Caco-2 (cell line): ENCODE measurements at regions of chr1 and their contacts with region 1.

Region 1: GRCh38 chr1:16236511-16237342 is at the start of gene CPLANE2:
- DNase-seq: peak; percentile 92 to 93
- H3K4me3 ChIP-seq: peak within 1 kb of the TSS; percentile 68
- H3K4me3 Mint-ChIP-seq: peak within 1 kb of the TSS; percentile 82
- H3K27ac Mint-ChIP-seq: peak within 1 kb of the TSS; percentile 93
- H3K4me1 ChIP-seq: 0 out of 2 replicates have a peak, but pooled peaks cover 5% of the 10 kb centered on the region
- H3K4me1 Mint-ChIP-seq: no peaks in the 10 kb centered on the region
- H3K27me3 ChIP-seq: no peaks in the 10 kb centered on the region
- H3K27me3 Mint-ChIP-seq: no peaks in the 10 kb centered on the region
- CTCF ChIP-seq: no peak
- total RNA-seq, gene CPLANE2: 2.1 and 4.2 TPM in 2 replicates

Region 2: DNA sequence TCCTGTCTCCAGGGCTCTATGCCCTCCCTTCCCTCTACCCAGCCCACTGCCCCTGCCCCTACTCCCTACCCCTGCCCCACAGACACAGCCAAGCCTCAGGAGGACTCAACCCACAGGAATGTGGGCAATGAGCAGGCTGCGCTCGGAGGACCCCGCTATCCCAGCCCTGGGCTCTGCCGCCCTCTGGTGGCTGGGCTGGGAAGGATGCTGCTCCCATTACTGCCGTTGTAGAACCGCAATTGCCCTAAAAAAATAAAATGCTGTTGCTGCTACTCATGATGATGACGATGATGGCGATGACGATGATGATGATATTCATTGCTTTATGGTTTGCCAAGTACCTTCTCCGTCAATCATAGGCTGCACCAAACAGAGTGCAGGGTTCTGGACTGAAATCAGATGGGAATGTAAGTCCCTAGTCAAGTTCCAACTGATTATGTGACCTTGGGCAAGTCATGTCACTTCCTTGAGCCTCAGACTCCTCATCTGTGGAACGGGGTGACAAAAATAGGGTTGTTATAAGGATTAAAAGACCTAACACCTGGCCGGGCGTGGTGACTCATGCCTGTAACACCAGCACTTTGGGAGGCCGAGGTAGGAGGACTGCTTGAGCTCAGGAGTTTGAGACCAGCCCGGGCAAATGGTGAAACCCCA is 48.9 kb before region 1 on chr1:
- CTCF ChIA-PET with region 1: no interaction called
- POLR2A ChIA-PET with region 1: no interaction called
- intact Hi-C with region 1: loop called (anchors 5 kb)
- DNase-seq: peak; percentile 73 to 85
- H3K4me3 ChIP-seq: no peak overlapping the region
- H3K4me3 Mint-ChIP-seq: no peak overlapping the region
- H3K27ac Mint-ChIP-seq: no peak overlapping the region
- H3K4me1 ChIP-seq: peaks cover 26% of the 10 kb centered on the region
- H3K4me1 Mint-ChIP-seq: peaks cover 15% of the 10 kb centered on the region
- H3K27me3 ChIP-seq: no peaks in the 10 kb centered on the region
- H3K27me3 Mint-ChIP-seq: no peaks in the 10 kb centered on the region
- CTCF ChIP-seq: peak; percentile 85 to 89

Region 3: DNA sequence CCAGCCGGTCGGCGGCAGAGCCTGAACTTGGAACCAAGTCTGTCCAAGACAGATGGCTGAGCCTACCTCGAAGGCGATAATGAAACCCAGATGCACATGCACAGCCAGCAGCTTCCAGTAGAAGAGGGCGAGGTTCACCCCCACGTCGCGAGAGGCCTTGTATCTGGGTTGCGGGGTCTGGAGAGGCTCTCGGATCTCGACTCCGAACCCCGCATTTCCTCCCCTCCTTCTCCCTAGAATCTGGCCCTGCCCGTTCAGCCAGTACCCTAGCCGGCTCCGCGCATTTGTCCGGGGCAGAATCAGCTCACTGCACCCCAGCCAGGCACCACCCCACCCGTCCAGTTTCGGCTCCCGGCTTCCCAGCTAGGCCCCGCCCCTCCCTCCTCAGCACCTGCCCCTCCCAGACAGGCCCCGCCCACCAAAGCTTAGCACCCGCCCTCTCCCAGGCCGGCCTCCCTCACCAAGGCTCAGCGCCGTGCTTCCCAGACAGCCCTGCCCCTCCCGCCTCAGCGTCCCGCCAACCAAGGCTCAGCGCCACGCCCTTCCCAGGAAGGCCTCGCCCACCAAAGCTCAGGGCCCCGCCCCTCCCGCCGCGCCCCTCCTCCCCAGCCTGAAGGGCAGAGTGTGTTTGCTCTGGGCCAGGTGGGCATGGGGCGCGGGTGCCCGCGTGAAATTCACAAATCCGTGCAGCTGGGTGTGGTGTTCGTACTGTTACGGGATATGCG is 19.5 kb before region 1 on chr1:
- CTCF ChIA-PET with region 1: no interaction called
- POLR2A ChIA-PET with region 1: interaction called, 5 read pairs
- intact Hi-C with region 1: loop called (anchors 1 kb)
- DNase-seq: peak; percentile 95 to 97
- H3K4me3 ChIP-seq: peak overlapping the region; percentile 51
- H3K4me3 Mint-ChIP-seq: peak overlapping the region; percentile 79
- H3K27ac Mint-ChIP-seq: no peak overlapping the region
- H3K4me1 ChIP-seq: peaks cover 11% of the 10 kb centered on the region
- H3K4me1 Mint-ChIP-seq: peaks cover 7% of the 10 kb centered on the region
- H3K27me3 ChIP-seq: no peaks in the 10 kb centered on the region
- H3K27me3 Mint-ChIP-seq: peaks cover 6% of the 10 kb centered on the region
- CTCF ChIP-seq: no peak